Tibial artery (tissue), 4 donors: ENCODE measurements at regions of chr6 and their contacts with region 1.

Region 1: GRCh38 chr6:41683510-41684310 is 45.4 kb downstream of the MDFI start:
- DNase-seq: peak; percentile 75 to 89
- H3K4me3 ChIP-seq: peak overlapping the region; percentile 50 to 55
- H3K27ac ChIP-seq: peak overlapping the region in 1 of 2 donors; percentile 69
- H3K4me1 ChIP-seq: peaks cover 0 to 23% (median 16%) of the 10 kb centered on the region in 4 donors
- H3K27me3 ChIP-seq: no peaks in the 10 kb centered on the region
- CTCF ChIP-seq: peak; percentile 82 to 91

Region 2: DNA sequence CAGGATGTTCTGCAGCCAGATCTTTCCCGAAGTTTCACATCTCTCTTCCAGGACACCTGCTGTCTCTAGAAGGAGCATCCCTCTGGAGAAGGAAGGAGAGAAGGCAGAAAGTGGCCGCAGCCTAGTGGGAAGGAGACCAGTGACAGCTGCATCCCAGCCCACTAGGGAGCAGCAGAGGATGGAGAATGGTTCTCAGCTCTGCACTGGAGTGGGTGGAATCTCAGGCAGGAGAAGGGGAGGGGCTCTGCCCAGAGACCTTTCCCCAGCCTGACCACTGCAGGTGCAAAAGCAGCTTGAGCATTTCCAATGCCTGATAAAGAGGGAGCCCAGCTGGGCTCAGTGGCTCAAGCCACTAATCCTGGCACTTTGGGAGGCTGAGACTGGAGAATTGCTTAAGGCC is 316.0 kb before region 1 on chr6:
- intact Hi-C with region 1: loop called (anchors 2 kb)
- DNase-seq: no peak
- H3K4me3 ChIP-seq: no peak overlapping the region
- H3K27ac ChIP-seq: no peak overlapping the region
- H3K4me1 ChIP-seq: peaks cover 0 to 25% (median 19%) of the 10 kb centered on the region in 4 donors
- H3K27me3 ChIP-seq: peaks cover 3 to 77% of the 10 kb centered on the region in 2 donors
- CTCF ChIP-seq: peak; percentile 32 to 40

Region 3: DNA sequence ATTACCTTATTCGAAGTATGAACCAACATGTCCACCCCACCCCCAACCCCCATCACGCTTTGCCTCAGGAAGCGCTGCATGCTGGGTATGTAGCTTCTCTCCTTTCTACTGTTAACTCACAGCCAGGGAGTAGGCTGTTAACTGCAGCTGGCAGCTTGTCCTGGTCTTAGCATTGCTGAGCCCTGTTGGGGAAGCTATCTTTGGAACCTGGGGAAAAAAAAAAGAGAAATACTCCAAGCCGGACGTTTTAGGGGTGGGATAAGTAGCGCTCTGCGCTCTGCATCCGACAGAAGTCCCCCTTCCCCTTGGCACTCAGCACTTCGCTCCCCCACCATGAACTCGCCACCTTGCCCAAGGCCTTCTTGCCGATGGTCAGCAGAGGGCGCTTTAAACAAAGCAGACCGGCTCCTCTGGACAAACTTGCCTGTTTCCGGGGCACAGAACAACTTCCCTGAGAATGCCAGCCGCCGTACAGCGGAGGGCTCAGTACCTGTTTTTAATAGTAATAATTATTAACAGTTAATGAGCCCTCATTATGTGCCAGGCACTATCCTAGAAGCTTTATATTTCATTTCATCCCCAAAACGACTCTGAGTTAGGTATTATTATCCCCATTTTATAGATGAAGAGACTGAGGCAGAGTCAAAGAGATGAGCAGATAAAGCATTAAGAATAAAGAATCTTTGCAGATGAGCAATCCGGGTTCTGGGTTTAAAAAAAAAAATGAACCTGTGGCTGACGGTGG is 80.7 kb before region 1 on chr6:
- intact Hi-C with region 1: loop called (anchors 2 kb)
- DNase-seq: peak; percentile 68 to 83
- H3K4me3 ChIP-seq: no peak overlapping the region
- H3K27ac ChIP-seq: no peak overlapping the region
- H3K4me1 ChIP-seq: peaks cover 0 to 17% (median 6%) of the 10 kb centered on the region in 4 donors
- H3K27me3 ChIP-seq: peaks cover 0 to 3% of the 10 kb centered on the region in 2 donors
- CTCF ChIP-seq: peak; percentile 81 to 88

Region 4: GRCh38 chr6:41818271-41819054 is 134.8 kb after region 1 on chr6:
- intact Hi-C with region 1: no loop called
- DNase-seq: no peak
- H3K4me3 ChIP-seq: no peak overlapping the region
- H3K27ac ChIP-seq: no peak overlapping the region
- H3K4me1 ChIP-seq: no peaks in the 10 kb centered on the region
- H3K27me3 ChIP-seq: no peaks in the 10 kb centered on the region
- CTCF ChIP-seq: no peak